Aorta (tissue), 5 donors: ENCODE measurements at regions of chr11 and their contacts with region 1.

Region 1: DNA sequence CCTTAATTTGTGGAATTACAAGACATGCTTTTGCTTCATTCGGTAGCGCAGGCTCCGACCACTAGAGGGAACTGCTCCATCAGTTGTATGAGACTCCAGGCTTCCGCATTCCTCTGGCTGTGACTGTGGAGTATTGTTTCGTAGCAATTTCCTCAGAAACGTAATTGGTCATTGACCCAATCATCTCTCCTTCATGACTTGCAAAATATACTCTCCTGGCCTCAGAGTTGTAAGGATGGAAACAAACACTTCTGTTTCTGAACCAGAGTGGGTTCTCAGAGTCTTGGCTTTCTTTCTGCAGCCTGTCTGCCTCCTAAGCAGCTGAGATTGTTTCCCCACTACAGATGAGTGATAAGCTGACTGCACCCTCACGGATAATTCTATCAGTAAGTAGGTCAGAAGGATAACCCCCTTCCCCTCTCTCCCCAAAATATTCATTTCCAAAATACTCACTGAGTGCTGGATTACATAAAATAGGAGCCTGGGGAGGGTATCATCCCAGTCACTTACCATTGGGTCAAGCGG is 146.8 kb upstream of the ZC3H12C start:
- DNase-seq: peak; percentile 90 to 92
- ATAC-seq: peak; percentile 97
- H3K4me3 ChIP-seq: peak overlapping the region; percentile 29 to 84
- H3K27ac ChIP-seq: peak overlapping the region; percentile 28 to 86
- H3K4me1 ChIP-seq: peaks cover 0 to 3% of the 10 kb centered on the region in 2 donors
- H3K27me3 ChIP-seq: no peaks in the 10 kb centered on the region

Region 2: DNA sequence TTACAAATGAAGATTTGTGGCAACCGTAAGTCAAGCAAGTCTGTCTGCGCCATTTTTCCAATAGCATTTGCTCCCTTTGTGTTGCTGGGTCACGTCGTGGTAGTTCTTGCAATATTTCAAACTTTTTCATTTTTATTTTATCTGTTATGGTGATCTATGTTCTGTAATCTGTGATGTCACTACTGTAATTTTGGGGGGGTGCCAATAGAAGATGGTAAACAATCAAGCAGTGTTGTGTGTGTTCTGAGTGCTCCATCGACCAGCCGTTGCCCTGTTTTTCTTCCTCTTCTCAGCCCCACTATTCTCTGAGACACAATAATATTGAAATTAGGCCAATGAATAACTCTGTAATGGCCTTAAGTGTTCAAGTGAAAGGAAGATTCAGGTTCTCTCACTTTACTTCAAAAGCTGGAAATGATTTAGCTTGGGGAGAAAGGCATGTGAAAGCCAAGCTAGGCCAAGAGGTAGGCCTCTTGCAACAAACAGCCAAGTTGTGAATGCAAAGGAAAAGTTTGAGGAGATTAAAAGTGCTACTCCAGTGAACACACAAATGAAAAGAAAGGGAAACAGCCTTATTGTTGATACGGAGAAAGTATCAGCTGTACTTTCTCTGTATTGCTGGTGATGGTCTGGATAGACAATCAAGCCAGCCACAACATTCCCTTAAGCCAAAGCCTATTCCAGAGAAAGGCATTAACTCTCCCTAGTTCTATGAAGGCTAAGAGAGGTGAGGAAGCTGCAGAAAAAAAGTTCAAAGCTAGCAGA is 154.3 kb after region 1 on chr11:
- intact Hi-C with region 1: no loop called
- DNase-seq: no peak
- ATAC-seq: no peak
- H3K4me3 ChIP-seq: no peak overlapping the region
- H3K27ac ChIP-seq: no peak overlapping the region
- H3K4me1 ChIP-seq: peaks cover 0 to 5% of the 10 kb centered on the region in 2 donors
- H3K27me3 ChIP-seq: no peaks in the 10 kb centered on the region

Region 3: GRCh38 chr11:110158317-110159200 is 212.2 kb after region 1 on chr11:
- intact Hi-C with region 1: loop called in 1 of 2 experiments (anchors 10 kb)
- DNase-seq: no peak
- ATAC-seq: no peak
- H3K4me3 ChIP-seq: no peak overlapping the region
- H3K27ac ChIP-seq: no peak overlapping the region
- H3K4me1 ChIP-seq: no peaks in the 10 kb centered on the region
- H3K27me3 ChIP-seq: no peaks in the 10 kb centered on the region

Region 4: DNA sequence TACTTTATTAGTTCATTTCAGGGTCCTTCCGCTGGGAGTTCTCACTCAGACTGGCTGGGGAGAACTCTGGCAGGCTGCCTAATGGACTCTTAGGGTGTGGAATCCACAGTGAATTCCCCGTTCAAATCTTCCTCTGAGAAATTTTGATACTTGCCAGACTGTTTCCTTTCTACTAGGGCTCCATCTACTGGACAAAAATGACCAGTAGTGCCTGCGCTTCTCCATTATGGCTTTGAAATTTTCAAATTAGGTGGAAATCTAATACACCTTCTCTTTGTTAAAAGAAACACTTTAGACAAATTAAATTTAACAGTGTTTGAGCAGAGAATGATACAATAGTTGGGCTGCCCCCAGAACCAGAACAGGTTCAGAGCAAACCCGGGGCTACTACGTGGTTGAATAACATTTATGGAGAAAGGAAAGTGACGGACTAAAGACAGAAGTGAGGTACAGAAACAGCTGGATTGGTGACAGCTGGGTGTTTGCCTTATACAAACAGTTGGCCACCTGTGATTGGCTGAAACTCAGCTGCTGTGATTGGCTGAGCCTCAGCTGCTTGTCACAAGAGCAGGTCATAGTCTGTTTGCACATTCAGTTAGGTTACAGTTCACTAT is 430.4 kb after region 1 on chr11:
- intact Hi-C with region 1: loop called (anchors 5 kb)
- DNase-seq: peak in 1 of 2 donors; percentile 75
- ATAC-seq: peak; percentile 82
- H3K4me3 ChIP-seq: no peak overlapping the region
- H3K27ac ChIP-seq: peak overlapping the region in 1 of 2 donors; percentile 26
- H3K4me1 ChIP-seq: no peaks in the 10 kb centered on the region
- H3K27me3 ChIP-seq: no peaks in the 10 kb centered on the region